ENCODE measurements at regions of chr5 and their contacts with region 1.

Region 1: GRCh38 chr5:14190194-14191164 is 47.3 kb downstream of the TRIO start:
- DNase-seq: no peak
- ATAC-seq: peak; percentile 21
- H3K4me3 Mint-ChIP-seq: peak overlapping the region; percentile 5
- H3K27ac Mint-ChIP-seq: peak overlapping the region; percentile 42
- H3K4me1 Mint-ChIP-seq: peaks cover 86% of the 10 kb centered on the region
- H3K27me3 Mint-ChIP-seq: no peaks in the 10 kb centered on the region
- CTCF ChIP-seq: no peak

Region 2: GRCh38 chr5:14174230-14174637 is 16.2 kb before region 1 on chr5:
- CTCF ChIA-PET with region 1: interaction called, 3 read pairs
- POLR2A ChIA-PET with region 1: interaction called, 5 read pairs
- intact Hi-C with region 1: loop called (anchors 1 kb)
- DNase-seq: no peak
- ATAC-seq: peak; percentile 68
- H3K4me3 Mint-ChIP-seq: peak overlapping the region; percentile 78
- H3K27ac Mint-ChIP-seq: peak overlapping the region; percentile 93
- H3K4me1 Mint-ChIP-seq: peaks cover 83% of the 10 kb centered on the region
- H3K27me3 Mint-ChIP-seq: no peaks in the 10 kb centered on the region
- CTCF ChIP-seq: no peak

Region 3: DNA sequence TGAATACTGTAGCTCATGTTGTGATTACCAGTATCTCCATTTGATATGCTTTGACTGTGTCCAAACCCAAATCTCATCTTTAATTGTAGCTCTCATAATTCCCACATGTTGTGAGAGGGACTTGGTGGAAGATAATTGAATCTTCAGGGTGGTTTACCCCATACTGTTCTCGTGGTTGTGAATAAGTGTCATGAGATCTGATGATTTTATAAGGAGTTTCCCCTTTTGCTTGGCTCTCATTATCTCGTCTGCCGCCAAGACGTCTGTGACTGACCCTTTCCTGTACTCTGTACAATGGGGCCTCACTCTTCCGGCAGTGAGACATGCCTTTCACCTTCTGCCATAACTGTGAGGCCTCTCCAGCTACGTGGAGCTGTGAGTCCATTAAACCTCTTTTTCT is 12.0 kb after region 1 on chr5:
- CTCF ChIA-PET with region 1: no interaction called
- POLR2A ChIA-PET with region 1: no interaction called
- intact Hi-C with region 1: loop called (anchors 1 kb)
- DNase-seq: no peak
- ATAC-seq: peak; percentile 53
- H3K4me3 Mint-ChIP-seq: no peak overlapping the region
- H3K27ac Mint-ChIP-seq: peak overlapping the region; percentile 84
- H3K4me1 Mint-ChIP-seq: peaks cover 76% of the 10 kb centered on the region
- H3K27me3 Mint-ChIP-seq: no peaks in the 10 kb centered on the region
- CTCF ChIP-seq: no peak

Measured in activated B cell treated with CpG ODN at 0.5 μM for 24 hours (primary cell).